Right ventricle myocardium superior (tissue), 1 donor: ENCODE measurements at regions of chr14 and their contacts with region 1.

Region 1: DNA sequence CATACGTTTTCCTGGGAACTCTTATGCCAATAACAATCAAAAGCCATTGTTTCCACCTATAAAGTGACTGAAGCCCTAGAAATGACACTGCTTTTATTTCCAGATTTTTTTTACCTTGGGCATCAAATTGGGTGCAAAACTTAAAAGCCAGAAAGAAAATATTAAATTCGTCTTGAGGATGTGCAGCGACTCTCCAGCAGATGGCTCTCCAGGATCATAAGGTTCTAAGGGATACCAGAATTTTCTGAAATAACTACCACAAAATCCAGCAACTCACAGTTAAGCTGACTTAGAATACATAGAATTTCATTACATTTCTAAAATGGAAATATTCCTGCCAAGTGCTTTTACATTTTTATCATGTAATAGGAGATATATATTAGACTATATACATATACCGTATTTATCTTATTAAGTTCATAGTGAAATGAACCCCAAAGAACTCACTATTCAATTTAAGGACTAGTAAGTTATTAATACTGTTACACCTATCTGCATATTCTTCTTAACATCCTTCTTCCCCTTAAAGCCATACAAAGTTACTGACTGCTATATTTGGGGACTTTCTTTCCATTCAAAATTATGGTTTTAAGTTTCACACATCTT is 44.0 kb downstream of the ARMH4 start:
- DNase-seq: no peak
- ATAC-seq: peak; percentile 67

Region 2: GRCh38 chr14:58166005-58166983 is 58.2 kb after region 1 on chr14:
- intact Hi-C with region 1: loop called (anchors 2 kb)
- DNase-seq: peak; percentile 90
- ATAC-seq: peak; percentile 90